ENCODE measurements at regions of chr7 and their contacts with region 1.

Region 1: DNA sequence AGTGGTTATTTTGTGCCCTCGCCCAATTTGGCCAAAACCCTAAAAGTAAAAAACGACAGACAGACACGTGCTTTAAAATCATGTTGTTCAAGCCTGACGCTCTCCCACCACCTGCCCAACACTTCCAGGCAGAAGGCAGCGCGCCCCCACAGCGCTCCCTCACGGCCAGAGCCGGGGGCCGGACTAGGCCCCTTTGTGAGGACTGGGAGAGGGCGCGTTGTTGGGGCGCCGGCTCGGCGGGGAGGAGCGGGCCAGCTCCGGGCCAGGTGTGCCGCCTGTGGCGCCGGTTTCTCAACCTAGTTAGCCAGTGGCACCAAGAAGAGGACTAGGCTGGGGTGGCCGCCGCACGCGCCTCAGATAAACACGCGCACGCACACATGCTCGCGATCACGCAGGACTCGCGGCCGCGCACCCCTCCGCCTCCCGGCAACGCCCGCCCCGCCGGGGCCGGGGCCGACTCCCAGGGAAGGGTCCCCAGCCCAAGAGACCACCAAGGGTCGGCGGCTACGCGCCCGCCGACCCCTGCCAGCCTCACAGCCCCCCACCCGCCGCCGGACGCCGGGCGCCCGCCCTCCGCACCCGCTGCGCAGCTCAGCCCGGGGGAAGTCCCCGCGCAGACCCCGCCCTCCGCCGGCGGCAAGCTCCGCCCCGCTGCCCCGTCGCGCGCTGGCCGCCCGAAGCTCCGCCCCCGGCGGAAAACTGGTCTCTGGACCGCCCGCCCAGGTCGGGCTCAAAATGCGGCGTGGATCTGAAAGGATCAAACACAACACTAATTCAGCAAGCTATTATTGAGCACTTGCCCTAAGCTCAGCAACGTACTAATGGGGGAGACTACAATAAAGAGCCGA is at the start of gene IMMP2L:
- DNase-seq: peak; percentile 94
- ATAC-seq: peak; percentile 95
- H3K4me3 Mint-ChIP-seq: peak within 1 kb of the TSS; percentile 90
- H3K27ac Mint-ChIP-seq: peak within 1 kb of the TSS; percentile 94
- H3K4me1 Mint-ChIP-seq: peaks cover 37% of the 10 kb centered on the region
- H3K27me3 Mint-ChIP-seq: peaks cover 3% of the 10 kb centered on the region
- total RNA-seq, gene IMMP2L: 15.8 to 25.8 TPM

Region 2: DNA sequence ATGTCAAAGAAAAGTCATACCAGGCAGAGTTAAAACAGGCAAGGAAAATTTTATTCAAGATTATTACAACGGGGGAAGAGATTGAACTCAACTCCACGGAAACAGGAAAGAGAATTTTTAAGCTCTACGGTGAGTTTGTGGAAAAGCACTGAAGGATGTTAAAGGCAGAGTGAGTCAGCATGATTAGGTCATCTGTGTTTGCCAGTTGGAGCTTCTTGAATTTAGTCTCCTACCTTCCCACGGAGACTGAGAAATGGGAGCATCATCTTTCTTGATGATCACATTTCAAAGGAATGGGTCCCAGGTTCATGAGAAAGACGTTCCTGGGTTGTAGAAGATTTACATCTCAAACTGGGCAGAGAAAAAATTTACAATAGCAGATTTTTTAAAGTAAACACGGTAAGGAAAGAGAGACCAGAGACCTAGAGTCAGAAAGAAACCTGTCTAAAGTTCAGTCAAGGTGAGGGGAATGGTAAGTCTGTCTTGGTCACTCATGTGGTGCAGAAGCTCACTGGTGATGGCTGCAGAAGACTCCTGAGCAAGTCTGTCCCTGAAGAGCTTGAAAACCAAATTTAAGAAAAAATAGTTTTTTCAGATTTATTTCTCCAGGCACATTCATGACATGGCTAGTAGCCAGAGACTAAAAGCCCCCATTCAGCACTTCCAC is 988.1 kb before region 1 on chr7:
- CTCF ChIA-PET with region 1: no interaction called
- POLR2A ChIA-PET with region 1: no interaction called
- intact Hi-C with region 1: no loop called
- DNase-seq: no peak
- ATAC-seq: no peak
- H3K4me3 Mint-ChIP-seq: no peak overlapping the region
- H3K27ac Mint-ChIP-seq: no peak overlapping the region
- H3K4me1 Mint-ChIP-seq: no peaks in the 10 kb centered on the region
- H3K27me3 Mint-ChIP-seq: no peaks in the 10 kb centered on the region

Region 3: GRCh38 chr7:111012799-111013675 is 549.1 kb before region 1 on chr7:
- CTCF ChIA-PET with region 1: no interaction called
- POLR2A ChIA-PET with region 1: no interaction called
- intact Hi-C with region 1: loop called in 1 of 2 experiments (anchors 5 kb)
- DNase-seq: peak; percentile 57
- ATAC-seq: peak; percentile 81
- H3K4me3 Mint-ChIP-seq: peak overlapping the region; percentile 53
- H3K27ac Mint-ChIP-seq: peak overlapping the region; percentile 85
- H3K4me1 Mint-ChIP-seq: peaks cover 70% of the 10 kb centered on the region
- H3K27me3 Mint-ChIP-seq: no peaks in the 10 kb centered on the region

Region 4: DNA sequence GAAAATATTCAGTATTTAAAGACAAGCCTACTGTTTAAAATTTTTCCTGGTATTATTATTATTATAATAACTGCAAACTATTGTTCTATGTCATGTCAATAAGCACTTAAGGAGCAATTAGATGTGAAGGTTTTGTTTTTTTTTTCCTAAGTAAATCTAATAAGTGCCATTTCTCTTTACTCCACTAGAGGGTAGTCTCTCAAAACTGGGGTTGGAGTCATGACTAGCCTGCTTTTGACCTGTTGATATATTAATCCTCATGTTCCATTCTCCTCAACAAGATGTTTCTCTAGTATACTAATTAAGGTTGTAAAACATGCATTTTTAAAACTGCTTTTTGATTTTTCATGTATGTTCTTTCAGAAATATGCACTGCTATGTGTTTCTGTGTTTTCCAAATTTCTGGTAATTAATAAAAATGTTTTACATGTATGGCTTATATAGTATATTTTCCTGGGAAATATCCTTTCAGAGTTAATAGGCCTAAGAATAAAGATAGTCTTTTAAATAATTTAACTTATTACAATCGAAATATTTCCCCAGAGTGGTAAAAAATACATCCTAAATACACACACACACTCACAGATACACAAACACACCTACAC is 472.2 kb before region 1 on chr7:
- CTCF ChIA-PET with region 1: no interaction called
- POLR2A ChIA-PET with region 1: interaction called, 3 read pairs
- intact Hi-C with region 1: loop called (anchors 5 kb)
- DNase-seq: no peak
- ATAC-seq: no peak
- H3K4me3 Mint-ChIP-seq: no peak overlapping the region
- H3K27ac Mint-ChIP-seq: peak overlapping the region; percentile 80
- H3K4me1 Mint-ChIP-seq: peaks cover 86% of the 10 kb centered on the region
- H3K27me3 Mint-ChIP-seq: no peaks in the 10 kb centered on the region

Region 5: DNA sequence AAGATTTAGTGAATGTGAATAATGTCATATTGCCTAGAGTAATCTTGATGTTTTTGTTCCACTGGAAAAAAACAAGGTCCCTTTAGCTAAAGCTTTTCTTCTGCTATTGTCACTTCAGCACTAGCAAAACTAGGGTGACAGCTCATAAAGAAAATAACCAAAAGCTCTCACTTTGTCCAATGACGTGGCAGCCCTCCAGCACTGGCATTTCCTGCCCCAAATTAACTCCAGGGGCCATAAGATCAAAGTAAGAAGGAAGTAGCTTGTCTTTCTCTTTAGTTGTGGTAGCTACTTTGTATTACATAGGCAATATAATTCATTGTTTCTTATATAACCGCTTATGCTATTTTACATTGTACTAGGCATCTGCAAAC is 423.9 kb before region 1 on chr7:
- CTCF ChIA-PET with region 1: no interaction called
- POLR2A ChIA-PET with region 1: no interaction called
- intact Hi-C with region 1: loop called in 1 of 2 experiments (anchors 2 kb)
- DNase-seq: peak; percentile 83
- ATAC-seq: peak; percentile 96
- H3K4me3 Mint-ChIP-seq: peak overlapping the region; percentile 53
- H3K27ac Mint-ChIP-seq: peak overlapping the region; percentile 93
- H3K4me1 Mint-ChIP-seq: peaks cover 33% of the 10 kb centered on the region
- H3K27me3 Mint-ChIP-seq: no peaks in the 10 kb centered on the region

Region 6: DNA sequence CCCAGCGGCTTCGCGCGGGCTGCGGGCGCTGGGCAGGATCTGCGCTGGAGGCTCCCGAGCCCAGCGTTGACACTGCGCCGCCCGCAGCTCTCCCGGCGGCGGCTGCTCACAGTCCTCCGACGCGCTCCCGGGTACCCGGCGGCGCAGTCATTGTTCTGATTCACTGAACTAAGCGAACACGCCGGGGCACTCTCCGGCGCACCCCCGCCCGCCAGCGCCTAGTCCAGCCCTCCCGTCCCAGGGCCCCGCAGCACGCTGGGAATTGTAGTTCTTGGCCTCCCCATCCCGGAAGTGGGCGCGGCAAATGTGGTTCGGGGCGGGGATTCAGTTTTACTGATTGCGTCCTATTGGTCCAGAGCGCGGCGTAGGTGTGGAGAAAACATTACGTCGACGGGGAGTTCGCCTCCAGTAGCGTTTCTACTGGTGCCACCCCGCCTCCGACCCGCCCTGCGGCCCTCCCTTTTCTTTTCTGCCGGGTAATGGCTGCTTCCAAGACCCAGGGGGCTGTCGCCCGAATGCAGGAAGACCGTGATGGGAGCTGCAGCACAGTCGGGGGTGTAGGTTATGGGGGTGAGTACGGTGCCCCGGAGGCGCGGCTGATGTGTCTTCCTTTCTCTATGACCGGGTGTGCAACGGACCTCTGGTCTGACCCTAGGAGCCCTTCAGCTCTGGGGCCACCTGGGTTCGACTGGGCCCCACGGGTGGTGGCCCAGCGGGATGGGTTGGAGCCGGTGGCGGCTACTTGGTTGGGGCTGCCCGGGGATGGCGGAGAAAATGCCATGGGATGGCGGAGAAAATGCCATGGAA is 644.3 kb after region 1 on chr7 and contains the starts of genes DOCK4 and ZNF277:
- CTCF ChIA-PET with region 1: no interaction called
- POLR2A ChIA-PET with region 1: no interaction called
- intact Hi-C with region 1: loop called (anchors 1 to 2 kb)
- DNase-seq: peak; percentile 100
- ATAC-seq: peak; percentile 94
- H3K4me3 Mint-ChIP-seq: peak within 1 kb of the TSS; percentile 92
- H3K27ac Mint-ChIP-seq: peak within 1 kb of the TSS; percentile 84
- H3K4me1 Mint-ChIP-seq: peaks cover 34% of the 10 kb centered on the region
- H3K27me3 Mint-ChIP-seq: peaks cover 30% of the 10 kb centered on the region
- total RNA-seq, gene DOCK4: 0.32 TPM
- total RNA-seq, gene ZNF277: 17.6 to 21.4 TPM

Region 7: GRCh38 chr7:112510001-112510742 is 948.1 kb after region 1 on chr7:
- CTCF ChIA-PET with region 1: no interaction called
- POLR2A ChIA-PET with region 1: no interaction called
- intact Hi-C with region 1: no loop called
- DNase-seq: peak; percentile 27
- ATAC-seq: peak; percentile 85
- H3K4me3 Mint-ChIP-seq: no peak overlapping the region
- H3K27ac Mint-ChIP-seq: peak overlapping the region; percentile 3
- H3K4me1 Mint-ChIP-seq: peaks cover 13% of the 10 kb centered on the region
- H3K27me3 Mint-ChIP-seq: peaks cover 5% of the 10 kb centered on the region

Region 8: GRCh38 chr7:112939574-112940314 is 1377.6 kb after region 1 on chr7:
- CTCF ChIA-PET with region 1: no interaction called
- POLR2A ChIA-PET with region 1: no interaction called
- intact Hi-C with region 1: loop called in 1 of 2 experiments (anchors 10 kb)
- DNase-seq: peak; percentile 99
- ATAC-seq: peak; percentile 97
- H3K4me3 Mint-ChIP-seq: peak overlapping the region; percentile 80
- H3K27ac Mint-ChIP-seq: peak overlapping the region; percentile 96
- H3K4me1 Mint-ChIP-seq: peaks cover 28% of the 10 kb centered on the region
- H3K27me3 Mint-ChIP-seq: no peaks in the 10 kb centered on the region